Thyroid gland (tissue), 4 donors: ENCODE measurements at regions of chr4 and their contacts with region 1.

Region 1: GRCh38 chr4:54099748-54100574 is at the start of gene GSX2:
- DNase-seq: no peak
- H3K4me3 ChIP-seq: peak within 1 kb of the TSS in 1 of 3 donors; percentile 23
- H3K27ac ChIP-seq: no peak within 1 kb of the TSS
- H3K4me1 ChIP-seq: peaks cover 23 to 24% of the 10 kb centered on the region in 2 donors
- H3K27me3 ChIP-seq: peaks cover 64% of the 10 kb centered on the region
- CTCF ChIP-seq: no peak
- POLR2A ChIP-seq: no peak
- total RNA-seq, gene GSX2: not detected

Region 2: DNA sequence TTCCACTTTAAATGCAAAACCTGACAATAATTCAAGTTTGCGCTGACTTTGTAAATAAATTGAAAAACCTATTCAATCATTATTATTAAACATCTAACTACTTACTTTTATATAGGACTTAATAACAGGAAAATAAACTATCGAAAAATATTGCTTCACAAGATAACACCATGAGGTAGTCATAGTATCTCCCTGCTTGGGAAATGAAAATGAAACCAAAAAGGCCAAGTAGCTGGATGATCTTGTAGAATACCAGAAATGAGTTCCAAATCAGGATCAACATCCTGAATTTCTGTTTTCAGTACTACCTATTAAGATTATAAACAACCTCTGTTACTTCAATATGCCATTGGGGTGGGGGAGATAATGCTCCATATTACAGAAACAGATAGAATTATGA is 94.5 kb before region 1 on chr4:
- intact Hi-C with region 1: no loop called
- DNase-seq: no peak
- H3K4me3 ChIP-seq: no peak overlapping the region
- H3K27ac ChIP-seq: peak overlapping the region in 1 of 3 donors; percentile 19
- H3K4me1 ChIP-seq: peaks cover 0 to 2% of the 10 kb centered on the region in 2 donors
- H3K27me3 ChIP-seq: no peaks in the 10 kb centered on the region
- CTCF ChIP-seq: no peak
- POLR2A ChIP-seq: no peak

Region 3: DNA sequence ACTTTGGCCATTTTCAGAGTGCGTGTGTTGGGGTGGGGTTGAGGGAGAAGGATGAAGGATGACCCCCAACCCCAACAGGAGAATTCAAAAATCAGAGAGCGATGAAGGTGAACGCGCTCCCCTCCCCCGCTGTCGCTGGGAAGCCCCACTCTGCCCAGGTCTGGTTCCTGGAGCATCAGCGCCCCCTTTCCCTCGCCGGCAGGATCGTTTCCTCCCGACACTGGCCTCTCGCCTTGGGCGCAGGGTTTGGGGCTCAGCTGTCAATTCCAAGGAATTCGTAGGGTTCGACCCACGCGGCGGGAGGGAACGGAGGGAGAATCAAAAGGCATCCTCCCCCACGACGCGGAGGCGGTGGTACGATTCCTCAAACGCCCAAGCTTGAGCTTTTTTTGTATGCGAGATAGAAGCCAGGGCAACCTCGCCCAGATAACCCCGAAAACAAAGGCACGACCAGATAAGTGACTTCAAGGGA is 128.1 kb after region 1 on chr4:
- intact Hi-C with region 1: loop called (anchors 10 kb)
- DNase-seq: peak; percentile 62 to 70
- H3K4me3 ChIP-seq: peak overlapping the region in 2 of 3 donors; percentile 7 to 32
- H3K27ac ChIP-seq: peak overlapping the region in 1 of 3 donors; percentile 41
- H3K4me1 ChIP-seq: peaks cover 47 to 66% of the 10 kb centered on the region in 2 donors
- H3K27me3 ChIP-seq: peaks cover 53% of the 10 kb centered on the region
- CTCF ChIP-seq: peak; percentile 17 to 70 (median 50)
- POLR2A ChIP-seq: no peak

Region 4: DNA sequence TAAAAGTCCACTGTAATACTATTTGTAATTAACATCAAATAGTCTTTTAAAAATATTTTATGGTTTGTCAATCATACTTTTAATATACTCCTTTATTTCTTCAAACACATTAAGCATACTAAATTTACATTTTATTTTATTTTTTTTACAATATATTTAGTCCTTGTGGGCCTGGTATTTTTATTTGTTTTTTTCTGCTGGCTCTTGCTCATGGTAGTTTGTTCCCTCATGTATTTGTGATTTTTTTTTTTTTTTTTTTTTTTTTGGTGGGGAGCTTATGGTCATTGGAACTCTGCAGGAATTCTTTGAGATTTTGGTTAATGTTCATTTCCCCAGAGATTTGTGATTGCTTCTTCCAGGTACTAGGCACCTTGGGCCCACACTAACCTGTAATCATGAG is 314.6 kb after region 1 on chr4:
- intact Hi-C with region 1: no loop called
- DNase-seq: no peak
- H3K4me3 ChIP-seq: no peak overlapping the region
- H3K27ac ChIP-seq: no peak overlapping the region
- H3K4me1 ChIP-seq: no peaks in the 10 kb centered on the region
- H3K27me3 ChIP-seq: no peaks in the 10 kb centered on the region
- CTCF ChIP-seq: no peak
- POLR2A ChIP-seq: no peak